Activated naive CD4-positive, alpha-beta T cell treated with anti-CD3 and anti-CD28 coated beads for 36 hours (primary cell): ENCODE measurements at regions of chr22 and their contacts with region 1.

Region 1: DNA sequence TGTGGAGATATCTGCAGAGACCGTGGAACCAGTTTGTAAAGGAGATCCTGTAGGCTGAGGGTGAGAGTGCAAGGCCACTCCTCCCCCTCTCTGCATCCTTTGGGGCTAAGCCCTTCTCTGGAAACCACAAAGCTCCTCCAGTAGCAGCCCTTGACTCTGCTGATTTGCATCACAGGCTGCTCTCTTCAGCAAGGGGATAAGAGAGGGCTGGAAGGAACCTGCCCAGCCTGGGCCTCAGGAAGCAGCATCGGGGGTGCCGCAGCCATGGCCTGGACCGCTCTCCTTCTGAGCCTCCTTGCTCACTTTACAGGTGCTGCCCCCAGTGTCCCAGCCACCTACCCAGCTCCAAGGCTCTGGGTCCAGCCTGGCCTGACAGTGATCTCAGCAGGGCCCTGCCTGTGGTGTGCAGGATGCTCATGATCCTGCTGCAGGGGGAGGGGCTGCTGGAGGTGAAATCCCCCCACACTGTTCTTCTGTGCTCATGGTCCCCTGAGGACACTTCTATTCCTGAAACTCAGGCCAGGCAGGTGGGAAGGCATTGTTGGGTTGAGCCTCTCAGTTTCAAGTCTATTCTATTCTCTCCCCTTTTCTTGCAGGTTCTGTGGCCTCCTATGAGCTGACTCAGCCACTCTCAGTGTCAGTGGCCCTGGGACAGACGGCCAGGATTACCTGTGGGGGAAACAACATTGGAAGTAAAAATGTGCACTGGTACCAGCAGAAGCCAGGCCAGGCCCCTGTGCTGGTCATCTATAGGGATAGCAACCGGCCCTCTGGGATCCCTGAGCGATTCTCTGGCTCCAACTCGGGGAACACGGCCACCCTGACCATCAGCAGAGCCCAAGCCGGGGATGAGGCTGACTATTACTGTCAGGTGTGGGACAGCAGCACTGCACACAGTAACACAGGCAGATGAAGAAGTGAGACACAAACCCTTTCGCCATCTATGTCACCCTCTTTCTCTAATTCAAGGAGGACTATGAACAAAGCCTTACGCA is 68.5 kb upstream of the IGLL5 start:
- DNase-seq: peak; percentile 37
- H3K4me3 Mint-ChIP-seq: no peak overlapping the region
- H3K27ac Mint-ChIP-seq: no peak overlapping the region
- H3K4me1 Mint-ChIP-seq: peaks cover 90% of the 10 kb centered on the region
- H3K27me3 Mint-ChIP-seq: no peaks in the 10 kb centered on the region

Region 2: GRCh38 chr22:22865311-22866072 is 46.3 kb after region 1 on chr22:
- CTCF ChIA-PET with region 1: interaction called, 4 read pairs
- intact Hi-C with region 1: loop called (anchors 2 kb)
- DNase-seq: peak; percentile 62
- H3K4me3 Mint-ChIP-seq: no peak overlapping the region
- H3K27ac Mint-ChIP-seq: no peak overlapping the region
- H3K4me1 Mint-ChIP-seq: peaks cover 37% of the 10 kb centered on the region
- H3K27me3 Mint-ChIP-seq: no peaks in the 10 kb centered on the region

Region 3: DNA sequence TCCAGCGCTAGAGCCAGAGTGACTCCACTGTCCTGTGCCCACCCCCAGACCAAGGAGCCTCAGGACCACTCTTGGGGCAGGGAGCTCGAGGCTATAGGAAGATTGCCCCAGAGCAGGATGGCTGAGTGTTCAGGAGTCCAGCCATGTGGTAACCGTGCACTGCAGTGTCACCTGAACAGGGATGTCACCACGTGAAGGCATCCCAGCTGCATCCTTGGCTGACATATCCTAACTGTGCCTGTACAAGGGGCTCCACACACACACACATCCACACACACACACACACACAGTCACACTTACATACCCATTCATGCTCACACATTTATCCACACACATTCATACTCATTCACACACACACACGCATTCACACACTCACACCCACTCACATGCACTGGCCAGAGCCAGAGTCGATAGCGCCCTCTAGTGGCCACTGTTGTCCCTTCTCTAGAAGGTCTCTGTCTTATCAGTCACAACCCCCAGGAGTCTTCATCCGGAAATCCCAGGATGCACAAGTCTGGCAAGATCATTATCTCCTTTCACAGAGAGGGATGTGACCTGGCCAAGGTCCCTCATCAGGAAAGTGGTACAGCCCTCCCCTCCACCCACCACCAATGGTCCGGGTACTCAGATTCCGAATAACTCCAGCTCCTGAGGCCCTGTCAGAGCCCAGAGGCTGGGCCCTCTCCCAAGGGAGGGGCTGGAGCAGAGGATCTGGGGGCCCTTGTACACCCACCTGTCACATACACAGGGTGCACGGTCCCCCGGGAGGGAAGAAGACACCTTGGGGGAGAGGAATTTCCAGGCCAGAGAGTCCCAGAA is 123.6 kb after region 1 on chr22:
- CTCF ChIA-PET with region 1: no interaction called
- intact Hi-C with region 1: no loop called
- DNase-seq: peak; percentile 89
- H3K4me3 Mint-ChIP-seq: no peak overlapping the region
- H3K27ac Mint-ChIP-seq: no peak overlapping the region
- H3K4me1 Mint-ChIP-seq: peaks cover 1% of the 10 kb centered on the region
- H3K27me3 Mint-ChIP-seq: peaks cover 2% of the 10 kb centered on the region